CD4-positive, alpha-beta memory T cell (primary cell): ENCODE measurements at regions of chr2 and their contacts with region 1.

Region 1: GRCh38 chr2:68766376-68766845 is 31.8 kb downstream of the ARHGAP25 start:
- DNase-seq: peak; percentile 79 to 89 (median 81)
- H3K4me3 ChIP-seq: peak overlapping the region; percentile 12 to 47
- H3K4me3 Mint-ChIP-seq: peak overlapping the region; percentile 78 to 95 (median 86)
- H3K27ac ChIP-seq: peak overlapping the region; percentile 90
- H3K27ac Mint-ChIP-seq: peak overlapping the region; percentile 95 to 99 (median 98)
- H3K4me1 ChIP-seq: peaks cover 99% of the 10 kb centered on the region
- H3K4me1 Mint-ChIP-seq: peaks cover 85 to 99% (median 92%) of the 10 kb centered on the region in 4 donors
- H3K27me3 ChIP-seq: no peaks in the 10 kb centered on the region
- H3K27me3 Mint-ChIP-seq: peaks cover 0 to 2% of the 10 kb centered on the region in 2 donors

Region 2: DNA sequence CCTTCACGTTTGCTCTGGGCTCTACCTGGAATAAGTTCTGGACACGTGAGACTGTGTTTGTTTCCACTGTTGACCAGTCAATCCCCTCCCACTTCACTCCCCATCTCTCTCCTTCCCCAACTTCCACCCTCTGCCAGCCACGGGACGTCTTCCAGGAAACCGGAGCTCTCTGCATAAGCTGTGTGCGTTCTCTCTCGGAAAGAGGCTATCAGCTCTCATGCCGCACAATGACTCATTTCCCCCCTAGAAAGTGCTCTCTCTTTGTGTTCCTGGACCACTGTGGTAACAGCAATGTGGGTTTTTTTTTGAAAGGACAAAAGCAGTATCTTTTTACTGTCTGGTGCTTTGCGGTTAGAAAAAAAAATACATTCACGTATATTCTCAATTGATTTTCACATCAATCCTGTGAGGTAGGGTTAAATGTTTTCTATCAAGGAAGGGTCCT is 112.9 kb before region 1 on chr2:
- CTCF ChIA-PET with region 1: no interaction called
- POLR2A ChIA-PET with region 1: no interaction called
- intact Hi-C with region 1: no loop called
- DNase-seq: peak; percentile 1 to 60 (median 21)
- H3K4me3 ChIP-seq: no peak overlapping the region
- H3K4me3 Mint-ChIP-seq: peak overlapping the region in 5 of 8 donors; percentile 12 to 58 (median 40)
- H3K27ac ChIP-seq: no peak overlapping the region
- H3K27ac Mint-ChIP-seq: peak overlapping the region in 5 of 7 donors; percentile 4 to 37 (median 26)
- H3K4me1 ChIP-seq: peaks cover 24% of the 10 kb centered on the region
- H3K4me1 Mint-ChIP-seq: peaks cover 10 to 32% (median 19%) of the 10 kb centered on the region in 4 donors
- H3K27me3 ChIP-seq: no peaks in the 10 kb centered on the region
- H3K27me3 Mint-ChIP-seq: peaks cover 2 to 11% of the 10 kb centered on the region in 2 donors

Region 3: GRCh38 chr2:68721482-68722101 is 44.8 kb before region 1 on chr2:
- CTCF ChIA-PET with region 1: interaction called, 22 read pairs
- POLR2A ChIA-PET with region 1: interaction called, 37 read pairs
- intact Hi-C with region 1: loop called (anchors 2 kb)
- DNase-seq: peak; percentile 64 to 78 (median 70)
- H3K4me3 ChIP-seq: peak overlapping the region in 1 of 2 donors; percentile 6
- H3K4me3 Mint-ChIP-seq: peak overlapping the region; percentile 63 to 89 (median 83)
- H3K27ac ChIP-seq: peak overlapping the region; percentile 54
- H3K27ac Mint-ChIP-seq: peak overlapping the region; percentile 91 to 98 (median 96)
- H3K4me1 ChIP-seq: peaks cover 96% of the 10 kb centered on the region
- H3K4me1 Mint-ChIP-seq: peaks cover 75 to 99% (median 90%) of the 10 kb centered on the region in 4 donors
- H3K27me3 ChIP-seq: no peaks in the 10 kb centered on the region
- H3K27me3 Mint-ChIP-seq: no peaks in the 10 kb centered on the region

Region 4: GRCh38 chr2:68734688-68735525 is 31.5 kb before region 1 on chr2 and contains the start of gene ARHGAP25:
- CTCF ChIA-PET with region 1: interaction called, 526 read pairs
- POLR2A ChIA-PET with region 1: interaction called, 728 read pairs
- intact Hi-C with region 1: loop called (anchors 2 kb)
- DNase-seq: peak; percentile 58 to 79 (median 61)
- H3K4me3 ChIP-seq: peak within 1 kb of the TSS; percentile 83 to 99
- H3K4me3 Mint-ChIP-seq: no peak within 1 kb of the TSS
- H3K27ac ChIP-seq: peak within 1 kb of the TSS; percentile 81
- H3K27ac Mint-ChIP-seq: no peak within 1 kb of the TSS
- H3K4me1 ChIP-seq: peaks cover 54% of the 10 kb centered on the region
- H3K4me1 Mint-ChIP-seq: peaks cover 23 to 44% (median 34%) of the 10 kb centered on the region in 4 donors
- H3K27me3 ChIP-seq: no peaks in the 10 kb centered on the region
- H3K27me3 Mint-ChIP-seq: no peaks in the 10 kb centered on the region
- total RNA-seq, gene ARHGAP25: 162 to 163 TPM

Region 5: GRCh38 chr2:68789603-68790002 is 23.2 kb after region 1 on chr2:
- CTCF ChIA-PET with region 1: interaction called, 15 read pairs
- POLR2A ChIA-PET with region 1: interaction called, 10 read pairs
- intact Hi-C with region 1: loop called (anchors 2 kb)
- DNase-seq: no peak
- H3K4me3 ChIP-seq: no peak overlapping the region
- H3K4me3 Mint-ChIP-seq: peak overlapping the region in 2 of 8 donors; percentile 4 to 12
- H3K27ac ChIP-seq: peak overlapping the region; percentile 15
- H3K27ac Mint-ChIP-seq: peak overlapping the region in 6 of 7 donors; percentile 71 to 90 (median 82)
- H3K4me1 ChIP-seq: peaks cover 78% of the 10 kb centered on the region
- H3K4me1 Mint-ChIP-seq: peaks cover 41 to 53% (median 48%) of the 10 kb centered on the region in 4 donors
- H3K27me3 ChIP-seq: no peaks in the 10 kb centered on the region
- H3K27me3 Mint-ChIP-seq: no peaks in the 10 kb centered on the region

Region 6: DNA sequence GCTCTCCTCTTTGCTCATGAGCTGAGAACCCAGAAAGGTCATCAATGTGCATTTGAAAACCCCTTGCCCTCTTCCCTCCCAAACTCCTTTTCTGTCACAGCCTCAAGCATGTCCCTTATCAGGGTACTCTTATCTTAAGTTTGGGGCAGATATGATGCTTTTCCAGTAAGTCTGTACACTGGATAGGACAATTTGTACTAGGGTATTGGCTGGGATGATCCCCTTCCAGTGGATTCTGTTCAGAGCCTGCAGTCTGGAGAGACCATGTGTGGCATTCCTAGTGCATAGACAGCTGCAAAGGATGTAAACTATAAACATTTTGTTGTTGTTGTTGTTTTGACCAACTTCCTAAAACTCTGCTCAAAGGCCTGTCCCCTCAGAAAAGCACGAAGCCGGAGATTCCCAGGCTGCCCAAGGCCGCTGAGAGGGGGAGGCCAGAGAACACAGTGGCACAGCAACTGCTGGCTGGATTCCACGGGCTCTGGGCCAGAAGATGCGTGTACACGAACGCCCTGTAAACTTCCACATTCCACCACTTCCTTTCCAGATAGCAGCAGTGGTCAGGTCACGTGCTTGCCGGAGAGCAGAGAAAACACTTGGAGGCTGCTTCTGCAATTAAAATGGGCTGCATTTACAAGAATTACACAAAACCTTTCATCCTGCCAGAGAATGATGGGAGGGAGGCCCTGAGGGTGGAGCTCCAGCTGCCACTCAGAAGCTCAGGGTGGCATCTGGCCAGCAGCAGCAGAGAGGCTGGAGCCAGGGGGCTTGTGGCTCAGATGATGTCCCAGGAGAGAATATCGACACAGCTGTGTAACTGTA is 62.7 kb after region 1 on chr2:
- CTCF ChIA-PET with region 1: interaction called, 4 read pairs
- POLR2A ChIA-PET with region 1: interaction called, 15 read pairs
- intact Hi-C with region 1: loop called (anchors 5 kb)
- DNase-seq: peak; percentile 80 to 90 (median 83)
- H3K4me3 ChIP-seq: peak overlapping the region in 1 of 2 donors; percentile 32
- H3K4me3 Mint-ChIP-seq: peak overlapping the region; percentile 17 to 91 (median 80)
- H3K27ac ChIP-seq: peak overlapping the region; percentile 65
- H3K27ac Mint-ChIP-seq: peak overlapping the region; percentile 90 to 94 (median 92)
- H3K4me1 ChIP-seq: peaks cover 59% of the 10 kb centered on the region
- H3K4me1 Mint-ChIP-seq: peaks cover 50 to 73% (median 62%) of the 10 kb centered on the region in 4 donors
- H3K27me3 ChIP-seq: no peaks in the 10 kb centered on the region
- H3K27me3 Mint-ChIP-seq: no peaks in the 10 kb centered on the region